Gastrocnemius medialis (tissue), 4 donors: ENCODE measurements at regions of chr1 and their contacts with region 1.

Region 1: DNA sequence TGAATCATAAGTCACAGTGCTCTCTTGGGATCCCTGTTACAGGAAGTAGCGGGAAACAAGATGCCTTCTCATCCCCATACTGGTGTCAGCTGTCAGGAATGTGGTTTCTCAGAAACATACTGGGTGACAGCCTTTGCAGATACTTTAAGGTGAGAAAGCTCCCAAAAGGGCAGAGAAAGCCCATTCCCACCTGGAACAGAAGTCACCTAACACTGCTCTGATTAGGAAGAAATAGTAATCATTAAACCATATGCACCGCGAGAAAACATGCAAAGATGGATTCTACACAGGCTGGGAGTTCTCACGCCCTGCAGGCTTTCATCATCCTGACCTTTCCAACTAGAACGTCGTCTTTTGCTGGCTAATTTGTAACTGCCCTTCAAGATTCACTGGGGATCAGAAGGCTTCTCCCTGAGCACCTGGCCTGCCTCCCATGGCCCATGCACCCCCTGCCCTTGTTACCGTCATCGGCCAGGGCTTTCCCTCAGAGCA is 46.2 kb upstream of the SLC44A3 start:
- DNase-seq: no peak
- ATAC-seq: no peak
- H3K4me3 ChIP-seq: no peak overlapping the region
- H3K27ac ChIP-seq: no peak overlapping the region
- H3K4me1 ChIP-seq: no peaks in the 10 kb centered on the region
- H3K27me3 ChIP-seq: no peaks in the 10 kb centered on the region
- CTCF ChIP-seq: no peak
- POLR2A ChIP-seq: no peak

Region 2: DNA sequence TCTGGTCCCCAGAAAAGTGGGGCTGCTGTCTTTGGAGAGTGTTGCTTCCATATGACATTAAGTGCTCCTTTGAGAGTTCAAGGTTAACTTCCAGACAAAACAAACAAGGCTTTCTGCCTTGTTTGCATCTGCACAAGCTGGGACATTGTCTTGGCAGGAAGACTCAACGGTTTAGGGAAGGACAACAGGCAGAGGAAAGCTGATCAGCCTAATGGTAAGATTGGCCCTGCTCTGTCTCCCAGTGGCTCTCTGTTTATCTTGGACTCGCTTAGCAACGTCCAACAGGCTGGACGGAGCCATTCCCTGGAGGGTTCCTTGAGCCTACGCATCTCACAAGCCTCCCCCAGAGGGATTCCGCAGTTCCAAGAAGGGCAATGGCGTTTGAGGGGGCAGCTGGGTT is 16.0 kb before region 1 on chr1:
- in situ Hi-C with region 1: no loop called
- intact Hi-C with region 1: loop called (anchors 1 kb)
- DNase-seq: peak in 1 of 2 donors; percentile 45
- ATAC-seq: peak; percentile 77 to 82
- H3K4me3 ChIP-seq: no peak overlapping the region
- H3K27ac ChIP-seq: peak overlapping the region; percentile 34 to 60 (median 46)
- H3K4me1 ChIP-seq: peaks cover 4 to 22% of the 10 kb centered on the region in 2 donors
- H3K27me3 ChIP-seq: no peaks in the 10 kb centered on the region
- CTCF ChIP-seq: no peak
- POLR2A ChIP-seq: no peak